Left ventricle myocardium superior (tissue), 1 donor: ENCODE measurements at regions of chr16 and their contacts with region 1.

Region 1: GRCh38 chr16:10509534-10510025 is 70.8 kb downstream of the EMP2 start:
- DNase-seq: peak; percentile 43
- ATAC-seq: peak; percentile 90

Region 2: GRCh38 chr16:10314811-10315210 is 194.8 kb before region 1 on chr16:
- intact Hi-C with region 1: loop called (anchors 5 kb)
- DNase-seq: no peak
- ATAC-seq: no peak

Region 3: DNA sequence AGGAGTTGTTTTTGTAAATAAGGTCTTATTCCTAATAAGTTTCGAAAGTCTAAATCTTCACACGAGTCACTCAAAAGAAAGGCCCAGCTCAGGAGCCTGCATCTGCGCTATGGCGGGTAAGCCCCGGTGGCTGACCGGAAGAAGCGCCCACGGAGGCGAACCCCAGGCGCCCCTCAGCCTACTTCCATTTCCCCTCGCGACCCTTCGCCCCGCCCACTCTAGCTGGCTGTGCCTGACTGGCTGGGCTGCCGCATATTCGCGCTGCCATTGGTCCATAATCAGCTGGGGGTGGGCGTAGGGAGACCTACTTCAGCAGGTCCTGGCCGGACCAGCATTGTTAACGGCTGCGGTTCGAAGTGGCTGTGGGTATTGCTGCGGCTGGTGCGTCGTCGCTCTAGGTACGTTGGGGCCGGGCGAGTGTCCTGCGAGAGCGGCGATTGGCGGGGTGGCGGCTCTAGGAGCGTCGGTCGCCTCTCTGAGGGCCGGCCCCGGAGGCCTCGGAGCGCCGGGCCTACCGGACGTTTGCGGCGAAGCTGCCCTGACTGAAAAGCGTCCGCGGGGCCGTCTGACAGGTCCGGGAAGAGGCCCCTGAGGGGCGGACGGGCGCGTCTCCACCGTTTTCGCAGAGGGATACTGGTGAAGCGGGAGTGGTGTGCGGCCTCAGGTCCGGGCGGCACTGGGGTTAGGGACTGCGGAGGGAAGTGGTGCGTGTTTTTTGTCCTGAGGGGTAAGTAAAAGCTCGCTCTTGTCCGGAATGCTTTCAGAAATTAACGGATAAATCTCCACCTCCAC is 123.7 kb before region 1 on chr16 and contains the start of gene ATF7IP2:
- intact Hi-C with region 1: loop called (anchors 10 kb)
- DNase-seq: peak; percentile 94
- ATAC-seq: peak; percentile 99
- total RNA-seq, gene ATF7IP2: 50.0 TPM

Region 4: GRCh38 chr16:10447289-10447688 is 62.3 kb before region 1 on chr16:
- intact Hi-C with region 1: no loop called
- DNase-seq: no peak
- ATAC-seq: no peak

Region 5: GRCh38 chr16:10688341-10689125 is 179.0 kb after region 1 on chr16:
- intact Hi-C with region 1: no loop called
- DNase-seq: no peak
- ATAC-seq: no peak

Region 6: GRCh38 chr16:10737068-10737625 is 227.6 kb after region 1 on chr16:
- intact Hi-C with region 1: loop called (anchors 2 kb)
- DNase-seq: no peak
- ATAC-seq: peak; percentile 60